ENCODE measurements at regions of chr12 and their contacts with region 1.

Region 1: DNA sequence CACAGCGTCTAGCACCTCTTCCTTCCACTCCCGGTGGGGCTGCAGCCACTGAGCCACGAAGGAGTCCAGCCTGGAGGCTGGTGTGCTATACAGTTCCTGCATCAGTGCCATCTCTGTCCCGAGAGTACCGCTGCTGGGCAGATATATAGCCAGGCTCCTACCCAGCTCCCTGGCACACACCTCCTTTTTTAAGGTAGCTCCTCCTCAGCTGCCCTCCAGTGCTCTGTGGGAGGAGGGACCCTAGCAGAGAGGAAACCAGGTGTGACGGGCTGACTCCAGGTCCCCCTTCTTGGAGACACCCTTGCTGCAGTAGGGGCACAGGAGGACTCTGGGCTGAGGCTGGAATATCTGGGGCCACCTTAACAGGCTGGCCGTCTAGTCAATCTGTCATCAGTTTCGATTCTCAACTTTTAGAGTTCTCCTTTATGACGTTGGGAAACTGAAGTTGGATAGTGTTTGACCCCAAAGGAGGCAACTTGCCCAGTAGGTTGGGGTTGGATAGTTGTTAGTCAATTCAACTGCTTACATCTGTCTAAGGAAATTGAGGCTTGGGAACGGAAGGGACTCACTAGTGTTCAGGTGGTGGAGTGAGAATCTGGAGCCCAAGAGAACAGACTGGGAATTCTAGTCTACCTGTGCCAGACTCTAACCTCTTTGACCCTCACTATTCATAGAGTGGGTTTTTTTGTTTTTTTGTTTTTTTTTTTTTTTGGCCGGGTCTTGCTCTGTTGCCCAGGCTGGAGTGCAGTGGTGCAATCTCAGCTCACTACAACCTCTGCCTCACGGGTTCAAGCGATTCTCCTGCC is at the start of gene OASL:
- DNase-seq: peak; percentile 89
- H3K4me3 Mint-ChIP-seq: peak within 1 kb of the TSS; percentile 89
- H3K27ac Mint-ChIP-seq: peak within 1 kb of the TSS; percentile 85
- H3K4me1 Mint-ChIP-seq: peaks cover 44% of the 10 kb centered on the region
- H3K27me3 Mint-ChIP-seq: peaks cover 13% of the 10 kb centered on the region
- total RNA-seq, gene OASL: 2.9 and 3.0 TPM in 2 replicates

Region 2: GRCh38 chr12:120797677-120798642 is 241.1 kb before region 1 on chr12:
- intact Hi-C with region 1: loop called (anchors 5 kb)
- DNase-seq: no peak
- H3K4me3 Mint-ChIP-seq: peak overlapping the region; percentile 29
- H3K27ac Mint-ChIP-seq: peak overlapping the region; percentile 84
- H3K4me1 Mint-ChIP-seq: peaks cover 34% of the 10 kb centered on the region
- H3K27me3 Mint-ChIP-seq: no peaks in the 10 kb centered on the region

Region 3: DNA sequence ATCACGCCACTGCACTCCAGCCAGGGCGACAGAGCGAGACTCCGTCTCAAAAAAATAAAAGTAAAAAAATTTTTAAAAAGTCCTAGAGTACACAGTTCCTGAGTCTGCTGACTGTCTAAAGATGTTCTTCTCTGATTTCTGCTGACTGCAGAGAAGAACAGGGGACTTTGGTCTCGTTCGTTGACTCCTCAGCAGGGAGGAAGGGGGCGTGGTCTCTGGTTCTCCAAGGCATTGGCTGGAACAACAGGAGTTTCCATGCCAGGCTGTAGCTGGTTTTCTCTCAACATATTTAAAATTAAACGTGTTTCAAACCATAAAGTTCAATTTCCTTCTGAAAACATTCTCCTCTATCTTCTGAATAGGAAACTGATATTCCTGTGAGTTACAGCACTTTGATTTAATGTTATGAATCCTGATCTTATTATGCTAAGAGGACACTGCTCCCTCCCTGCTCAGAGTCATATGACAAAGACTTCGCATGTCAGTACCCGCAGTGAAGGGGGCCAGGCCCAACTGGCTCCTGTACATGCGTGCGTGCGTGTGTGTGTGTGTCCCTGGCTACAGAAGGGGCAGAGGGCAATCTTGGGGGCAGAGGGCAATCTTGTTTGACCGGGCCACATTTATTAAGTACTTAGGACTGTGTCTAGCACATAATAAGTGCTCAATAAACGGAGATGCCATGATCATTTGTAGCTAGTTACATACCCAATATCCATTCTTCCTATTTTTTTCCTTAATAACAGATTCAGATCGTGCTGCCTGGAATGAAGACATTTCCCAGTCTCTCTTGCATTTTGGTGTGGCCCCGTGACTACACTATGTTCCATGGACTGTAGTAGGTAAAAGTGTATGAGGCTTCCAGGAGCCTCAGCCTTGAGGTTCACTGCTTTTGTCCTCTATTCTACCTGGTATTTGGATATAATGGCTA is 77.2 kb before region 1 on chr12:
- intact Hi-C with region 1: loop called (anchors 5 kb)
- DNase-seq: no peak
- H3K4me3 Mint-ChIP-seq: no peak overlapping the region
- H3K27ac Mint-ChIP-seq: peak overlapping the region; percentile 56
- H3K4me1 Mint-ChIP-seq: peaks cover 28% of the 10 kb centered on the region
- H3K27me3 Mint-ChIP-seq: no peaks in the 10 kb centered on the region

Region 4: GRCh38 chr12:121005346-121005815 is 33.7 kb before region 1 on chr12:
- intact Hi-C with region 1: no loop called
- DNase-seq: peak; percentile 86
- H3K4me3 Mint-ChIP-seq: no peak overlapping the region
- H3K27ac Mint-ChIP-seq: peak overlapping the region; percentile 51
- H3K4me1 Mint-ChIP-seq: peaks cover 5% of the 10 kb centered on the region
- H3K27me3 Mint-ChIP-seq: no peaks in the 10 kb centered on the region

Region 5: GRCh38 chr12:121015825-121016766 is 23.0 kb before region 1 on chr12 and contains the start of gene C12orf43:
- intact Hi-C with region 1: loop called (anchors 1 kb)
- DNase-seq: peak; percentile 98
- H3K4me3 Mint-ChIP-seq: peak within 1 kb of the TSS; percentile 98
- H3K27ac Mint-ChIP-seq: peak within 1 kb of the TSS; percentile 99
- H3K4me1 Mint-ChIP-seq: peaks cover 20% of the 10 kb centered on the region
- H3K27me3 Mint-ChIP-seq: no peaks in the 10 kb centered on the region
- total RNA-seq, gene C12orf43: 32.5 and 35.3 TPM in 2 replicates

Region 6: DNA sequence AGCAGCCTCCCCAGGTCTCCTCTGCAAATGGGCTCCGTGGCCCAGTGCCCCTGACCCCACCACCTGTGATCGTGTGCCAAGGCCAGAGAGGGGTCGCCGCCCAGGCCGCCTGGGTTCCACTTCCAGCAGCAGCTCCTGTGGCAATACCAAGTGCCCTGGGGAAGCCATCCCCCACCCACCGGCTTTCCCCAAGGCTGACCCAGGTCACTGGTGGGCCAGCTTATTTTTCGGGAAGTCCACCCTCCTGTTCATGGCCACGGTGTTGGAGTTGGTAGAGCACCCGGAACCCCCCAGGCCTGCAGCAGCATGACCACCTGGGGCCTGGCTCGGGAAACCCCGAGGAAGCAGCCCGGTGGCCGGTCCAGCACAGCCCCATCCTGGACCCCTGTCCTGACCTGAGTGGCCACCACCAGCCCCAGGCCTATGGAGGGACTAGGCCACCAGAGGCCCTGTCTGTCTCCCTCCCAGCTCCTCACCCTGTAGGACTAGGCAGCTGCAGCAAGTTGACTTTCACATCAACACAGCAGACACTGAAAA is 40.7 kb after region 1 on chr12:
- intact Hi-C with region 1: no loop called
- DNase-seq: peak; percentile 50
- H3K4me3 Mint-ChIP-seq: no peak overlapping the region
- H3K27ac Mint-ChIP-seq: no peak overlapping the region
- H3K4me1 Mint-ChIP-seq: no peaks in the 10 kb centered on the region
- H3K27me3 Mint-ChIP-seq: peaks cover 17% of the 10 kb centered on the region

Region 7: GRCh38 chr12:121095544-121096198 is 56.6 kb after region 1 on chr12:
- intact Hi-C with region 1: loop called (anchors 2 kb)
- DNase-seq: peak; percentile 94
- H3K4me3 Mint-ChIP-seq: peak overlapping the region; percentile 87
- H3K27ac Mint-ChIP-seq: peak overlapping the region; percentile 81
- H3K4me1 Mint-ChIP-seq: peaks cover 32% of the 10 kb centered on the region
- H3K27me3 Mint-ChIP-seq: peaks cover 14% of the 10 kb centered on the region